Body of pancreas (tissue), 4 donors: ENCODE measurements at regions of chr6 and their contacts with region 1.

Region 1: GRCh38 chr6:109705258-109705657 is 14.2 kb downstream of the FIG4 start:
- DNase-seq: peak; percentile 83 to 88 (median 86)
- ATAC-seq: peak; percentile 97
- H3K4me3 ChIP-seq: no peak overlapping the region
- H3K27ac ChIP-seq: no peak overlapping the region
- H3K4me1 ChIP-seq: peaks cover 4% of the 10 kb centered on the region
- H3K27me3 ChIP-seq: no peaks in the 10 kb centered on the region
- CTCF ChIP-seq: peak; percentile 87 to 99 (median 98)
- POLR2A ChIP-seq: no peak

Region 2: GRCh38 chr6:109790131-109790530 is 84.9 kb after region 1 on chr6:
- intact Hi-C with region 1: no loop called
- DNase-seq: no peak
- ATAC-seq: no peak
- H3K4me3 ChIP-seq: no peak overlapping the region
- H3K27ac ChIP-seq: peak overlapping the region in 2 of 4 donors; percentile 21 to 38
- H3K4me1 ChIP-seq: peaks cover 10% of the 10 kb centered on the region
- H3K27me3 ChIP-seq: no peaks in the 10 kb centered on the region
- CTCF ChIP-seq: no peak
- POLR2A ChIP-seq: no peak

Region 3: GRCh38 chr6:110039981-110040383 is 334.7 kb after region 1 on chr6:
- intact Hi-C with region 1: loop called (anchors 5 kb)
- DNase-seq: peak; percentile 18 to 46 (median 29)
- ATAC-seq: peak; percentile 57
- H3K4me3 ChIP-seq: no peak overlapping the region
- H3K27ac ChIP-seq: peak overlapping the region in 2 of 4 donors; percentile 15 to 51
- H3K4me1 ChIP-seq: peaks cover 9% of the 10 kb centered on the region
- H3K27me3 ChIP-seq: no peaks in the 10 kb centered on the region
- CTCF ChIP-seq: peak in 5 of 7 experiments; percentile 25 to 39 (median 36)
- POLR2A ChIP-seq: no peak

Region 4: GRCh38 chr6:110389689-110390382 is 684.6 kb after region 1 on chr6:
- intact Hi-C with region 1: loop called (anchors 5 kb)
- DNase-seq: peak in 1 of 4 donors; percentile 17
- ATAC-seq: peak; percentile 52
- H3K4me3 ChIP-seq: no peak overlapping the region
- H3K27ac ChIP-seq: peak overlapping the region in 1 of 4 donors; percentile 41
- H3K4me1 ChIP-seq: peaks cover 18% of the 10 kb centered on the region
- H3K27me3 ChIP-seq: no peaks in the 10 kb centered on the region
- CTCF ChIP-seq: no peak
- POLR2A ChIP-seq: no peak